ENCODE measurements at regions of chr3 and their contacts with region 1.

Region 1: GRCh38 chr3:71583566-71584449 is at the start of gene FOXP1:
- DNase-seq: peak; percentile 64
- ATAC-seq: peak; percentile 34
- H3K4me3 ChIP-seq: peak within 1 kb of the TSS; percentile 90
- H3K27ac ChIP-seq: peak within 1 kb of the TSS; percentile 98
- H3K4me1 ChIP-seq: peaks cover 15% of the 10 kb centered on the region
- H3K27me3 ChIP-seq: no peaks in the 10 kb centered on the region
- CTCF ChIP-seq: no peak
- POLR2A ChIP-seq: no peak
- RAD21 ChIP-seq: no peak; the same call in 1 of the 2 replicates
- total RNA-seq, gene FOXP1: 128 and 132 TPM in 2 replicates

Region 2: DNA sequence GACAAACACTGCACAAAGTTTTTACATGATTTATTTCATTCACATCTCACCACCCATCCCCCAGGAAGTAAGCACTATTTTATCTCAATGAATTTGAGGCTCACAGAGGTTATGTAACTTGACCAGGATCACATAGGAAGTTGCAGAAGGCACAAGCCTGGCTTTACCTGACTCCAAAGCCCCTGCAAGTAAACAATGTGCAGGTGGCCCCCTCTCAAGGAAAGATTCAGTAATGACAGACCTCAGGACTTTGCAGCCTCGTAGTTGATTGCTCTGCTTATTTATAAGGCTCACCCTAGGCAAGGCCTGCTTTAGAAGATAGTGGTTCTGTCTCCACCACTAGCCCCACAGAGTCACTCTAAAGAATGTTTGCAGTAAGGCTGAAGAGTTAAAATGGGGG is 1191.6 kb before region 1 on chr3:
- CTCF ChIA-PET with region 1: no interaction called
- POLR2A ChIA-PET with region 1: no interaction called
- dilution Hi-C with region 1: no loop called
- in situ Hi-C with region 1: no loop called
- intact Hi-C with region 1: no loop called
- DNase-seq: no peak
- ATAC-seq: no peak
- H3K4me3 ChIP-seq: no peak overlapping the region
- H3K27ac ChIP-seq: no peak overlapping the region
- H3K4me1 ChIP-seq: no peaks in the 10 kb centered on the region
- H3K27me3 ChIP-seq: peaks cover 3% of the 10 kb centered on the region; the same call in 1 of the 2 replicates
- CTCF ChIP-seq: no peak
- POLR2A ChIP-seq: no peak
- RAD21 ChIP-seq: no peak

Region 3: GRCh38 chr3:70550723-70551319 is 1033.0 kb before region 1 on chr3:
- CTCF ChIA-PET with region 1: no interaction called
- POLR2A ChIA-PET with region 1: no interaction called
- dilution Hi-C with region 1: no loop called
- in situ Hi-C with region 1: no loop called
- intact Hi-C with region 1: loop called (anchors 1 kb)
- DNase-seq: peak; percentile 54
- ATAC-seq: peak; percentile 93
- H3K4me3 ChIP-seq: no peak overlapping the region
- H3K27ac ChIP-seq: no peak overlapping the region
- H3K4me1 ChIP-seq: no peaks in the 10 kb centered on the region
- H3K27me3 ChIP-seq: peaks cover 5% of the 10 kb centered on the region; the same call in 1 of the 2 replicates
- CTCF ChIP-seq: peak; percentile 67
- POLR2A ChIP-seq: no peak
- RAD21 ChIP-seq: peak; percentile 79

Region 4: GRCh38 chr3:70999730-71000129 is 584.1 kb before region 1 on chr3:
- CTCF ChIA-PET with region 1: no interaction called
- POLR2A ChIA-PET with region 1: no interaction called
- dilution Hi-C with region 1: no loop called
- in situ Hi-C with region 1: loop called (anchors 10 kb)
- intact Hi-C with region 1: no loop called
- DNase-seq: peak; percentile 82
- ATAC-seq: peak; percentile 90
- H3K4me3 ChIP-seq: no peak overlapping the region
- H3K27ac ChIP-seq: no peak overlapping the region
- H3K4me1 ChIP-seq: peaks cover 10% of the 10 kb centered on the region
- H3K27me3 ChIP-seq: no peaks in the 10 kb centered on the region
- CTCF ChIP-seq: no peak
- POLR2A ChIP-seq: no peak
- RAD21 ChIP-seq: no peak

Region 5: GRCh38 chr3:71130471-71131374 is 453.1 kb before region 1 on chr3:
- CTCF ChIA-PET with region 1: no interaction called
- POLR2A ChIA-PET with region 1: no interaction called
- dilution Hi-C with region 1: no loop called
- in situ Hi-C with region 1: loop called (anchors 10 kb)
- intact Hi-C with region 1: loop called (anchors 1 kb)
- DNase-seq: peak; percentile 83
- ATAC-seq: peak; percentile 66
- H3K4me3 ChIP-seq: peak overlapping the region; percentile 64
- H3K27ac ChIP-seq: peak overlapping the region; percentile 99
- H3K4me1 ChIP-seq: peaks cover 11% of the 10 kb centered on the region
- H3K27me3 ChIP-seq: no peaks in the 10 kb centered on the region
- CTCF ChIP-seq: no peak
- POLR2A ChIP-seq: peak; percentile 64; the same call in 1 of the 2 replicates
- RAD21 ChIP-seq: peak; percentile 27; the same call in 1 of the 2 replicates

Region 6: DNA sequence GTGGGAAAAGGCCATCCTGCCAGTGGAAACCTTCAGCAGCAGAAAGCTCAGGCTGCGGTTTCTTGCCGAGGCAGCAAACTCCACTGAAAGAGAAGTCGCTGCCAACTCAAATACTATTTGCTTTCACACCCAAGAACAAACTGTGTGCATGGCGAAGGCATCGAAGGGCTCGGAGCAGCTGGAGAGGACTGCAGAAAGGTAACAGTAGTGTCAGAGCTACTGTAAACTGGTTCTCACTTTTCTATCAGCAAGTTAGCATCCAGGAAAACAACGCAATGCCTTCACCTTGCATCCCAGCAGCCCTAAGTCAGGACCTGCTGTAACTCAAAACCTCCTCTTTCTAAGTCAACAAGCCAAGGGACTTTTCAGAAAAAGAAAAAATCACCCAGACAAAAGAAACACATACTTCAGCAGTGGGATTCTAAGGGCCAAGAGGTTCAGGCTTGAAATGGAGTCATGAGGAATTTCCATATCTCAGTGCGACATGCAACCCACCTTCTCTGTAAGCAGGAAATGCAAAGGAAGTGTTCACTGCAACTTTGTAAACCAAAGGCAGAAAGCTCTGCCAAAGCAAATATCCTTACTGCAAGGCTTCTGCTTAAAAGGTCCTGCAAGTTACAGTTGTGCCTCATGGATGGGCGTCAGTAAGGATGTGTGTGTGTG is 193.8 kb before region 1 on chr3:
- CTCF ChIA-PET with region 1: no interaction called
- POLR2A ChIA-PET with region 1: interaction called, 13 read pairs
- dilution Hi-C with region 1: no loop called
- in situ Hi-C with region 1: no loop called
- intact Hi-C with region 1: no loop called
- DNase-seq: peak; percentile 65
- ATAC-seq: peak; percentile 71
- H3K4me3 ChIP-seq: no peak overlapping the region; the same call in 1 of the 2 replicates
- H3K27ac ChIP-seq: peak overlapping the region; percentile 16
- H3K4me1 ChIP-seq: peaks cover 5% of the 10 kb centered on the region
- H3K27me3 ChIP-seq: no peaks in the 10 kb centered on the region
- CTCF ChIP-seq: no peak
- POLR2A ChIP-seq: no peak
- RAD21 ChIP-seq: no peak

Region 7: GRCh38 chr3:71512000-71512399 is 71.8 kb before region 1 on chr3:
- CTCF ChIA-PET with region 1: no interaction called
- POLR2A ChIA-PET with region 1: no interaction called
- dilution Hi-C with region 1: no loop called
- in situ Hi-C with region 1: no loop called
- intact Hi-C with region 1: loop called (anchors 5 kb)
- DNase-seq: no peak
- ATAC-seq: no peak
- H3K4me3 ChIP-seq: no peak overlapping the region
- H3K27ac ChIP-seq: no peak overlapping the region
- H3K4me1 ChIP-seq: peaks cover 7% of the 10 kb centered on the region
- H3K27me3 ChIP-seq: no peaks in the 10 kb centered on the region
- CTCF ChIP-seq: no peak; the same call in 1 of the 2 replicates
- POLR2A ChIP-seq: no peak
- RAD21 ChIP-seq: no peak

Region 8: DNA sequence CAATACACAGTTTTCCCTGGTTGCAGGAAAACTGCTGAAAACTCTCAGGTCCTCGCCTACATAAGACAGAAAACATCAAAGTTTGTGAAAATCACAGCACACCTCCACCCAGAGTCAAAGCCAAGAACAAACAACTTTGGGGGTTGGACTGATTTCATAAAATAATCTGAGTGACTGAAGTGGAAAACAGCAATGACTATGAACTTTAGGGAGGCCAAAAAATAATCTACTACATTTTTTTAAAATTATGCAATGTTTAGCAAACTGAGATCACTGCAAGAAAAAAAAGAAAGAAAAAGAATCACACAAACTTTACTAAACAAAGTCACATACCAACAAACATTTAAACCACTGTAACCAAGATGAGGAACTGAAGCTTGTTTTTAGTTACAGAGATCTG is 15.6 kb after region 1 on chr3:
- CTCF ChIA-PET with region 1: no interaction called
- POLR2A ChIA-PET with region 1: no interaction called
- dilution Hi-C with region 1: no loop called
- in situ Hi-C with region 1: no loop called
- intact Hi-C with region 1: no loop called
- DNase-seq: peak; percentile 28
- ATAC-seq: peak; percentile 59
- H3K4me3 ChIP-seq: no peak overlapping the region
- H3K27ac ChIP-seq: no peak overlapping the region
- H3K4me1 ChIP-seq: peaks cover 6% of the 10 kb centered on the region; the same call in 1 of the 2 replicates
- H3K27me3 ChIP-seq: no peaks in the 10 kb centered on the region
- CTCF ChIP-seq: no peak
- POLR2A ChIP-seq: no peak
- RAD21 ChIP-seq: no peak

Region 9: GRCh38 chr3:71611099-71611498 is 27.3 kb after region 1 on chr3:
- CTCF ChIA-PET with region 1: no interaction called
- POLR2A ChIA-PET with region 1: no interaction called
- dilution Hi-C with region 1: no loop called
- in situ Hi-C with region 1: no loop called
- intact Hi-C with region 1: no loop called
- DNase-seq: no peak
- ATAC-seq: no peak
- H3K4me3 ChIP-seq: no peak overlapping the region
- H3K27ac ChIP-seq: no peak overlapping the region
- H3K4me1 ChIP-seq: no peaks in the 10 kb centered on the region
- H3K27me3 ChIP-seq: peaks cover 3% of the 10 kb centered on the region
- CTCF ChIP-seq: no peak
- POLR2A ChIP-seq: no peak
- RAD21 ChIP-seq: no peak

Measured in IMR-90 (cell line).